MCF 10A (cell line): ENCODE measurements at regions of chr22 and their contacts with region 1.

Region 1: GRCh38 chr22:31272522-31273446 is 19.5 kb downstream of the PIK3IP1 start:
- DNase-seq: peak; percentile 76
- H3K4me3 Mint-ChIP-seq: no peak overlapping the region
- H3K27ac Mint-ChIP-seq: no peak overlapping the region
- H3K4me1 Mint-ChIP-seq: peaks cover 8% of the 10 kb centered on the region
- H3K27me3 Mint-ChIP-seq: no peaks in the 10 kb centered on the region
- CTCF ChIP-seq: peak; percentile 66

Region 2: DNA sequence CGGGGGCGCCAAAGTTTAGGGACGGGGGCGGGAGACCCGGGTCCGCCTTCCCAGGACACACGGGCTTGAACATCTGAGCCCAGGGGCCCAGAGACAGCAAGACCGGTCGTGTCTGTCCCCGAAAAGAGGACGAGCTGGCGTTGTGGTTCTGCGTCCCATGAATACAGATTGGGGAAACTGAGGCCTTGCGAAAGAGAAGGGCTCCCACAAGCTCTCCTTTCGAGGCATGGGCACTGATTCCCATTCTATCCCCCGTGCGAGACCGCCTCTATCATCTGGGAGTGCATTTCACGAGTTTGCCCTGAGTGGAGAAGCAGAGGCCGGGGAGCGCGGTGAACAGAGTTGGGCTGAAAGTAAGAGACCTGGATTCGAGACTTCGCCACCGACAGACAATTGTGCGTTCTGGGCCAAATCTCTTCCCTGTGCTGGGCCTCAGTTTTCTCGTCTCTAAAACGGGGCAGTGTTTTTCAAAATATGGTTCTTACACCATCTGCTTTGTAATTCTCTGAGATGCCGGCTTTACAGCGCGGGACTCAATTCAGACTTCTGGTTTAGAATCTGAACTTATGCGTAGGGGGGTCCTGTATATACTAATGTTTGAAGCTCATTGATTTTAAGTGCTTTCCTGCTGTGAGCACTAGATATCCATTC is 112.3 kb before region 1 on chr22:
- CTCF ChIA-PET with region 1: interaction called, 6 read pairs
- POLR2A ChIA-PET with region 1: interaction called, 4 read pairs
- intact Hi-C with region 1: loop called (anchors 2 kb)
- DNase-seq: no peak
- H3K4me3 Mint-ChIP-seq: peak overlapping the region; percentile 89
- H3K27ac Mint-ChIP-seq: peak overlapping the region; percentile 97
- H3K4me1 Mint-ChIP-seq: peaks cover 14% of the 10 kb centered on the region
- H3K27me3 Mint-ChIP-seq: no peaks in the 10 kb centered on the region
- CTCF ChIP-seq: no peak

Region 3: DNA sequence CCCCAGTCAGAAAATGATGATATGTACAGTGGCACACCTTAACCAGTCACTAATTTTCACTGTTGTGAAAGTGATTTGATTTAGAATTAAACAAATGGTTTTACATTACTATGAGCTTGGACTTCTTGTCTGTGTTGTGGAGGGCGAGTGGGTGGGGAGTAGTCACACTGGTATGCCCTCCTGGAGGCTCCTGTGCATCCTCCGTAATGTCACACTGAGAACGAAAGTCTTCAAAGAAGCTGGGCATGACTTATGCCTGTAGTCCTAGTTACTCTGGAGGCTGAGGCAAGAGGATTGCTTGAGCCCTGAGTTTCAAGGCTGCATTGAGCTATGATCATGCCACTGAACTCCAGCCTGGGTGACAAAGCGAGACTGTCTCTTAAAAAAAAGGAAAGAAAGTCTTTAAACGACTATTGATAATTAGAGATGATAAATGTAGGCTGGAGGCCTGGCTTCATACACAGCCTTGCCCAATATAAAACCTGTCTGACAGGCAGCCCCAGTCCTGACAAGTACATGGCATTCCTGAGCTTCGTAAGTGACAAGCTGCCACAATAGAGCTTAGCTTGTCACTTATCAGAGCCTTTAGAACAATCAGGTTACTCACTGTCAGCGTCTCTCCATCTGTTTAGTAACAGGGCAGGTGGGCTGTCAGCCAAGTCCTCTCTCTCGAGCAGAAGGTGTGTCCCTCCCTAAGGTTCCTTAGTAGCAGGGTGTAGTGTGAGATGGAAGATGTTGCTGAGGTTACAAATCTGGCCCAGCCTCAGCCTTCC is 65.7 kb before region 1 on chr22:
- CTCF ChIA-PET with region 1: interaction called, 46 read pairs
- POLR2A ChIA-PET with region 1: interaction called, 7 read pairs
- intact Hi-C with region 1: loop called (anchors 1 kb)
- DNase-seq: peak; percentile 42
- H3K4me3 Mint-ChIP-seq: no peak overlapping the region
- H3K27ac Mint-ChIP-seq: peak overlapping the region; percentile 75
- H3K4me1 Mint-ChIP-seq: peaks cover 16% of the 10 kb centered on the region
- H3K27me3 Mint-ChIP-seq: no peaks in the 10 kb centered on the region
- CTCF ChIP-seq: no peak

Region 4: GRCh38 chr22:31253949-31254348 is 18.8 kb before region 1 on chr22:
- CTCF ChIA-PET with region 1: interaction called, 55 read pairs
- POLR2A ChIA-PET with region 1: interaction called, 188 read pairs
- intact Hi-C with region 1: no loop called
- DNase-seq: peak; percentile 97
- H3K4me3 Mint-ChIP-seq: peak overlapping the region; percentile 52
- H3K27ac Mint-ChIP-seq: peak overlapping the region; percentile 94
- H3K4me1 Mint-ChIP-seq: peaks cover 26% of the 10 kb centered on the region
- H3K27me3 Mint-ChIP-seq: no peaks in the 10 kb centered on the region
- CTCF ChIP-seq: no peak

Region 5: GRCh38 chr22:31262312-31263080 is 10.3 kb before region 1 on chr22:
- CTCF ChIA-PET with region 1: interaction called, 30 read pairs
- POLR2A ChIA-PET with region 1: interaction called, 188 read pairs
- intact Hi-C with region 1: no loop called
- DNase-seq: no peak
- H3K4me3 Mint-ChIP-seq: no peak overlapping the region
- H3K27ac Mint-ChIP-seq: no peak overlapping the region
- H3K4me1 Mint-ChIP-seq: peaks cover 11% of the 10 kb centered on the region
- H3K27me3 Mint-ChIP-seq: no peaks in the 10 kb centered on the region
- CTCF ChIP-seq: no peak

Region 6: GRCh38 chr22:31284281-31285155 is 11.7 kb after region 1 on chr22:
- CTCF ChIA-PET with region 1: interaction called, 29 read pairs
- POLR2A ChIA-PET with region 1: interaction called, 26 read pairs
- intact Hi-C with region 1: no loop called
- DNase-seq: no peak
- H3K4me3 Mint-ChIP-seq: no peak overlapping the region
- H3K27ac Mint-ChIP-seq: peak overlapping the region; percentile 49
- H3K4me1 Mint-ChIP-seq: peaks cover 9% of the 10 kb centered on the region
- H3K27me3 Mint-ChIP-seq: no peaks in the 10 kb centered on the region
- CTCF ChIP-seq: no peak

Region 7: GRCh38 chr22:31313366-31314147 is 40.8 kb after region 1 on chr22:
- CTCF ChIA-PET with region 1: interaction called, 22 read pairs
- POLR2A ChIA-PET with region 1: interaction called, 13 read pairs
- intact Hi-C with region 1: no loop called
- DNase-seq: peak; percentile 95
- H3K4me3 Mint-ChIP-seq: no peak overlapping the region
- H3K27ac Mint-ChIP-seq: peak overlapping the region; percentile 52
- H3K4me1 Mint-ChIP-seq: peaks cover 6% of the 10 kb centered on the region
- H3K27me3 Mint-ChIP-seq: no peaks in the 10 kb centered on the region
- CTCF ChIP-seq: peak; percentile 71